AG04449 (cell line): ENCODE measurements at regions of chr10 and their contacts with region 1.

Region 1: GRCh38 chr10:101042667-101043355 is 11.8 kb downstream of the SFXN3 start:
- DNase-seq: no peak
- H3K4me3 ChIP-seq: peak overlapping the region; percentile 61
- CTCF ChIP-seq: no peak

Region 2: DNA sequence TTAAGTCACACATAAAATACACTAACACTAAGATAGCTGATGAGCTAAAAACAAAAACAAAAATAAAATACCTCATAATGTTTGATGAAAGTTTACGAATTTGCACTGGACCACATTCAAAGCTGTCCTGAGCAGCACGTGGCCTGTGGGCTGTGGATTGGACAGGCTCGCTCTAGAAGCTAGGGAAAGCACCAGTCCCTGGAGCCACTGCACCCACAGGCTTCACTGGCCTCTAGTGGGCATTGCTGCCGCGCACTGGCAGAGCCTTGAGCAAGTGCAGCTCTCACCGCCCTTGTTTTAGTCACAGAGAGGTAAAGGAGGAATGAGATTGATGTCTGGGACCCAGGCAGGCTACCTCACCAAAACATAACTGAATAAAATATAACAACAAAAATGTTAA is 229.8 kb before region 1 on chr10:
- CTCF ChIA-PET with region 1: no interaction called
- POLR2A ChIA-PET with region 1: no interaction called
- DNase-seq: no peak
- H3K4me3 ChIP-seq: no peak overlapping the region
- CTCF ChIP-seq: no peak

Region 3: GRCh38 chr10:101018600-101019439 is 24.0 kb before region 1 on chr10:
- CTCF ChIA-PET with region 1: interaction called, 1,481 read pairs
- POLR2A ChIA-PET with region 1: no interaction called
- DNase-seq: no peak
- H3K4me3 ChIP-seq: no peak overlapping the region
- CTCF ChIP-seq: peak; percentile 98

Region 4: DNA sequence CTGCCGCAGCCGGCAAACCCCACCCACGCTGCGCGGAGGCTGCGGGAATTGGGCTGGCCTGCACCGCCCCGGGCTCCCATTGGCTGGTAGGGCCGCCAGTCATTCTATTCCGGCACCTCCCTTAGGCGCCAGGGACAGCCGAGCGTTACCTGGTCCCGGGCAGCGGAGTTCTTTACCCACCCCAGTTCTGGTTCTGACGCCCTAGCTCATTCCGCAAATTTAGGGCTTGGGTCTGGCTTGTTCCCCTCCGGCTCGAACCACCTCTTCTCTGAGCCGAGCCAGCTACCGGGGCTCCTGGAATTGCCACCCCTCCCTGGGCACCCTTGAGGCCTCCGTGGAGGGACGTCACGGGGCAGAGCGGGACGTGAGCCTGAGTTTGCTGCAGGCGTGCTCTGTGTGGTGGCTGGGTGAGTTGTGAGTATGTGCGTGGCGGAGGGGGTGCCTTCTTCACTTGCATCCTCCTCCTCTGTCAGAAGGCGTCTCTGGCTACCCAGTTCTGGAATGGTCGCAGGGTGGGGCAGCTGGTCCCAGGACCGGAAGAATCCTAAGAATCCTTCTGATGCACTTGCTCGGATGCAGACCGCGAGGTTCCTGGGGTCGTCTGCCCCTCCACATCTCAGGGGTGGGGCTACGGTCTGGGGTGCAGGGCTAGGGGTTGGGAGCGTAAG is 11.5 kb before region 1 on chr10 and contains the starts of genes PDZD7 and SFXN3:
- CTCF ChIA-PET with region 1: interaction called, 1,481 read pairs
- POLR2A ChIA-PET with region 1: interaction called, 18 read pairs
- DNase-seq: no peak
- H3K4me3 ChIP-seq: peak within 1 kb of the TSS; percentile 86
- CTCF ChIP-seq: no peak

Region 5: DNA sequence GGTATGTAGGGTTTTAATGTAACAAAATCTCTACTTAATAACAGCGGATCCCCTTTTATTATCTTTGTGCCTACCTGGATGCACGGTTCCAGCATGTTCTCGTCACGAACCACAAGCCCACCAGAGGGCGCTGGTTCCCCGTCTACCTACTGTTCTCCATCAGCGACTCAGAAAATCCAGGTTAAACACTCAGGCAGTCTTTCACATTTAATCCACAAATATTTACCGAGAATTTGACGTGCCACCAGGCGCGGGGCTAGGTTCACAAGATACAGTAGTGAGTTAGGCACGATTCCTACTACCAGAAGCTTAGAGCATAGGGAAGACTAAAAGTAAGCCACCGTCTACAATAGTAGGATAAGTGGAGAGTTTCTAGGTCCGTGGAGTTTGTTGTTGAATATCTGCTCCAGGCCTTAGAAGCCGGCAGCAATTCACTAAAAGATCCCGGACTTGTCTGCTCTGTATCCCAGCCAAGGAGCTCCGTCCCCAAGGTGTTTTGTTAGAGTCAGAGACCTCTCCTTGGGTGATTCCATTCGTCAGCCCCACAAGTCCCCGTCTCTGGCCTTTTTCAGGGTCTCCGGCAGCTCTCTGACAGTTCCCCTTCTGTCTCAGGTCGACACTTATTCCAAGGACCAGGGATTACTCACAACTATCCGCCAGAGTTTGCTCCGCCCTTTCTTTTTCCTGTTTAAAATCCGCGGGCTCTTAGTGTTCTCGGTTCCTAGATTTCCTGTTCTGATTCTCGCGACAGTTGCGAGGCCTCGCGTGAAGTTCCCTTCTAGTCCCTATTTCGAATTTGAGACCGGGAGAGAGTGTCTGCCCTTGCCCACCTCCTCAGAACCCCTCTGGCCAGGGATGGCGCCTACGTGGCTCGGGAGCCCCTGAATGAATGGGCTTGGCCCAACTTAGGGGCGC is 17.5 kb after region 1 on chr10:
- CTCF ChIA-PET with region 1: interaction called, 1,481 read pairs
- POLR2A ChIA-PET with region 1: interaction called, 16 read pairs
- DNase-seq: peak; percentile 50
- H3K4me3 ChIP-seq: peak overlapping the region; percentile 96
- CTCF ChIP-seq: peak; percentile 88

Region 6: DNA sequence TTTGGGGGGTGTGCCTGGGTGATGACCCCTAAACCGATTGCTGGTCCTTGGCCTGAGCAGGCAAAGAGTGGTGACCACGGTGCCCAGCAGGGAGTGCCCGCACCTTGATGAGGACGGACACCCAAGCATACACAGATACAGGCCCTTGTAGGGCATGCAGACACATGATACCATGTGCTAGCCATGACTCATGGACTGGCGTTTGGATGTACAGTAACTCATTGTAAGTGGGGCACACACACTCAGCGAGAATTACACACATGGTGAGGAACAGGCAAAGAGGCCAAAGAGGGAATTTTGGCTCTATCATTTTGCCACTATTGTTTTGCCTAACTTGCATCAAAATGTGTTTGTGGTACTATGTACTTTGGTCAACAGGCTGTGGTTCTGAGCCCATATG is 43.0 kb after region 1 on chr10:
- CTCF ChIA-PET with region 1: no interaction called
- POLR2A ChIA-PET with region 1: no interaction called
- DNase-seq: no peak
- H3K4me3 ChIP-seq: no peak overlapping the region
- CTCF ChIP-seq: no peak